ENCODE measurements at regions of chr20 and their contacts with region 1.

Region 1: DNA sequence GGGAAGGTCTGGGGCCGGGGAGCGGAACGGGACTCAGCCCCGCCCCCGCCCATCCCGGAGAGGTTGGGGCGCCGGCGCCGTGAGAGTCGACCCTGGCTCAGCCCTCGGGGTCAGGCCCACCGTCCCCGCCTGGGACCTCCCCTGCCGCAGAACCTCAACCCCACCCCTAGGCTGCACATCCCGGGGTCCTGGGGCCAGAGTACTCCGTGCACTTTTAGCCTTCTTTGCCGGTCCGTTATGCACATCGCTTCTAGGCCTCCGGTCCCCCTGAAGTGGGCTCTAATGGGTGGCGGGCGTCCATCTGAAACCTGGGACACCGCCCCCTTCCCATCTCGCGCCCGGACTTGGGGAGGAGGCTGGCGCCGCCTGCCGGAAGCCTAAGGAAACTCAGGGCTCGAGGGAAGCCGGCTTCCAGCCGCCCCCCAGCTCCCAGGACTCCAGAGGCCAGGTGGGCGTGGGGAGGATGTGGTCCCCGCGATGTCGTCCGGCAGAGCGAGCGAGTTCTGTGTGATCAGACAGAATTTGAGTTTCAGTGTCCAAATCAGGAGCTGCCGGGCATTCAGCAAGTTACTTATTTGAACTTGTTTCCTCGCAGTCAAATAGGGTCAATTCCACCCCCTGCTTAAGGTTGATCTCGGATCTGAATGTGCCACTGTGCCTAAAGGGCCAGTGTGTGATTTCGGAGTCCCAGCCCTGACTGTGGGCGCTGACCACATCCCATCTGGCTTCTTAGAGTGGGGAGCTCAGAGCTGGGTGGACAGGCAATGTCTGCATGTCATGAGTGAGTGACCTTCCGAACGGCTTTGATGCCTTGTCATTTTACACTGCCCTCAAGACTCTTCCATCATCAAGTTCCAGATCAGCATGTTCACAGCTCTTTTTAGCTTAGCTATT is 47.6 kb downstream of the CPXM1 start:
- DNase-seq: peak; percentile 77
- ATAC-seq: peak; percentile 22
- H3K4me3 Mint-ChIP-seq: peak overlapping the region; percentile 77
- H3K27ac Mint-ChIP-seq: no peak overlapping the region
- H3K4me1 Mint-ChIP-seq: peaks cover 37% of the 10 kb centered on the region
- H3K27me3 Mint-ChIP-seq: peaks cover 73% of the 10 kb centered on the region
- CTCF ChIP-seq: peak; percentile 80

Region 2: GRCh38 chr20:2626853-2627541 is 125.8 kb before region 1 on chr20:
- CTCF ChIA-PET with region 1: no interaction called
- POLR2A ChIA-PET with region 1: no interaction called
- DNase-seq: no peak
- ATAC-seq: no peak
- H3K4me3 Mint-ChIP-seq: no peak overlapping the region
- H3K27ac Mint-ChIP-seq: no peak overlapping the region
- H3K4me1 Mint-ChIP-seq: no peaks in the 10 kb centered on the region
- H3K27me3 Mint-ChIP-seq: peaks cover 34% of the 10 kb centered on the region
- CTCF ChIP-seq: no peak

Region 3: GRCh38 chr20:2663887-2664719 is 88.7 kb before region 1 on chr20 and contains the start of gene IDH3B:
- CTCF ChIA-PET with region 1: no interaction called
- POLR2A ChIA-PET with region 1: no interaction called
- DNase-seq: peak; percentile 88
- ATAC-seq: peak; percentile 90
- H3K4me3 Mint-ChIP-seq: peak within 1 kb of the TSS; percentile 98
- H3K27ac Mint-ChIP-seq: peak within 1 kb of the TSS; percentile 100
- H3K4me1 Mint-ChIP-seq: peaks cover 6% of the 10 kb centered on the region
- H3K27me3 Mint-ChIP-seq: peaks cover 24% of the 10 kb centered on the region
- CTCF ChIP-seq: no peak
- total RNA-seq, gene IDH3B: 101 to 136 TPM (median 107 TPM) in 3 replicates

Region 4: GRCh38 chr20:2688041-2688591 is 64.7 kb before region 1 on chr20:
- CTCF ChIA-PET with region 1: interaction called, 120 read pairs
- POLR2A ChIA-PET with region 1: interaction called, 3 read pairs
- DNase-seq: peak; percentile 79
- ATAC-seq: peak; percentile 76
- H3K4me3 Mint-ChIP-seq: peak overlapping the region; percentile 59
- H3K27ac Mint-ChIP-seq: no peak overlapping the region
- H3K4me1 Mint-ChIP-seq: peaks cover 21% of the 10 kb centered on the region
- H3K27me3 Mint-ChIP-seq: peaks cover 87% of the 10 kb centered on the region
- CTCF ChIP-seq: peak; percentile 86

Region 5: GRCh38 chr20:2700913-2701620 is 51.7 kb before region 1 on chr20:
- CTCF ChIA-PET with region 1: interaction called, 12 read pairs
- POLR2A ChIA-PET with region 1: interaction called, 3 read pairs
- DNase-seq: no peak
- ATAC-seq: no peak
- H3K4me3 Mint-ChIP-seq: no peak overlapping the region
- H3K27ac Mint-ChIP-seq: no peak overlapping the region
- H3K4me1 Mint-ChIP-seq: peaks cover 29% of the 10 kb centered on the region
- H3K27me3 Mint-ChIP-seq: peaks cover 95% of the 10 kb centered on the region
- CTCF ChIP-seq: no peak

Region 6: GRCh38 chr20:2780948-2781347 is 28.1 kb after region 1 on chr20:
- CTCF ChIA-PET with region 1: interaction called, 10 read pairs
- POLR2A ChIA-PET with region 1: no interaction called
- DNase-seq: no peak
- ATAC-seq: peak; percentile 43
- H3K4me3 Mint-ChIP-seq: no peak overlapping the region
- H3K27ac Mint-ChIP-seq: no peak overlapping the region
- H3K4me1 Mint-ChIP-seq: no peaks in the 10 kb centered on the region
- H3K27me3 Mint-ChIP-seq: peaks cover 20% of the 10 kb centered on the region
- CTCF ChIP-seq: no peak

Region 7: GRCh38 chr20:2822073-2822472 is 69.3 kb after region 1 on chr20:
- CTCF ChIA-PET with region 1: interaction called, 11 read pairs
- POLR2A ChIA-PET with region 1: no interaction called
- DNase-seq: no peak
- ATAC-seq: no peak
- H3K4me3 Mint-ChIP-seq: no peak overlapping the region
- H3K27ac Mint-ChIP-seq: no peak overlapping the region
- H3K4me1 Mint-ChIP-seq: peaks cover 15% of the 10 kb centered on the region
- H3K27me3 Mint-ChIP-seq: peaks cover 65% of the 10 kb centered on the region
- CTCF ChIP-seq: no peak

Region 8: GRCh38 chr20:3000852-3001523 is 248.2 kb after region 1 on chr20:
- CTCF ChIA-PET with region 1: interaction called, 15 read pairs
- POLR2A ChIA-PET with region 1: no interaction called
- DNase-seq: no peak
- ATAC-seq: peak; percentile 53
- H3K4me3 Mint-ChIP-seq: no peak overlapping the region
- H3K27ac Mint-ChIP-seq: no peak overlapping the region
- H3K4me1 Mint-ChIP-seq: 0 out of 2 replicates have a peak, but pooled peaks cover 6% of the 10 kb centered on the region
- H3K27me3 Mint-ChIP-seq: no peaks in the 10 kb centered on the region
- CTCF ChIP-seq: no peak